ENCODE measurements at regions of chr20 and their contacts with region 1.

Region 1: DNA sequence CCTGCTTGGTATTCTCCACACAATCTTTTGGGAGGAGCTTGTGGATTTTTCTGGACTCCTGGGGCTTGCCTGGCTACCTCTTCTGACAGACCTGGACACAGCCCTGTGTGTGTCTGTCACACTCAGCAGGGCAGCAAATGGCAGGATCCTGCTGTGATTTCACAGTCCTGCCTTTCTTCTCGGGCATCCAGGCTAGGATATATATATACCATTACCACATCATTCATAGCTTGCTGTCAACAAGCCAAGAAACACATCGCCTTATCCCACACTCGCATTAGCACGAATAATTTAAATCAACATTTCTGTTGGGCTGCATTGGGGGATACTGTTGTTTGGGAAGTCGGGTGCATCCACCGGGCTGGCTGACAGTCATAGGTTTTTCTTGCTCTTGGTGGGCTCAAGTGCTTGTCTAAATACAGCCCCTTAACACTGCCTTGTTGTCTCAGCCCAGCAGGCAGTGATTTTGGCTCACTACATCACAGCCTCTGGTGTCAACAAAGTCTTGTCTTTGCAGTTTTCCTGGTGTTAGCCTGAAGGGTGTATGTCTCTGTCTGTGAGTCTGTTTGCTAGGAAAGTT is 154.9 kb upstream of the FERMT1 start:
- DNase-seq: no peak
- ATAC-seq: no peak
- H3K4me3 ChIP-seq: no peak overlapping the region
- H3K27ac ChIP-seq: no peak overlapping the region
- H3K4me1 ChIP-seq: no peaks in the 10 kb centered on the region
- H3K27me3 ChIP-seq: no peaks in the 10 kb centered on the region
- CTCF ChIP-seq: no peak
- POLR2A ChIP-seq: no peak

Region 2: DNA sequence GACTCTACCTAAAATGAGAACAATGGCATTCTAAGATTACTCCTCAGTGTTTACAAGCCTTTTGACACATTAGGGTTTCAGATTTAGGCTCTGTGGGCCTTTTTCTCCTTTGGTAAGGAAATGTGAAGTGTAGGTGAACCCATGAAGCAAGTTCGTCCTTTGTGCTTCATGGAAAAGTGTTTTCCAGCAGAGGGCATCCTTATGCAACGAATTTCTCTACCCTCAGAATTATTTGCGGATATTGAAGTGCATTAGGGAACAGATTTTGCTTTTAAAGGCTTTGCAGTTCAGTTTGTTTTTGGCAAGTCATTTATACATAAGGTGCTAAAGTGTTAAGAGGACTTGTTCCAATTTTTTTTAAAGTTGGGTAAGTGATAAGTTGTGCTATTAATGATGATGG is 99.2 kb before region 1 on chr20:
- in situ Hi-C with region 1: loop called in 1 of 4 experiments (anchors 25 kb)
- intact Hi-C with region 1: no loop called
- DNase-seq: no peak
- ATAC-seq: no peak
- H3K4me3 ChIP-seq: no peak overlapping the region
- H3K27ac ChIP-seq: no peak overlapping the region
- H3K4me1 ChIP-seq: no peaks in the 10 kb centered on the region
- H3K27me3 ChIP-seq: no peaks in the 10 kb centered on the region
- CTCF ChIP-seq: no peak
- POLR2A ChIP-seq: no peak

Region 3: GRCh38 chr20:6333110-6333509 is 55.4 kb after region 1 on chr20:
- in situ Hi-C with region 1: no loop called
- intact Hi-C with region 1: no loop called
- DNase-seq: no peak
- ATAC-seq: no peak
- H3K4me3 ChIP-seq: no peak overlapping the region
- H3K27ac ChIP-seq: no peak overlapping the region
- H3K4me1 ChIP-seq: no peaks in the 10 kb centered on the region
- H3K27me3 ChIP-seq: no peaks in the 10 kb centered on the region
- CTCF ChIP-seq: no peak
- POLR2A ChIP-seq: no peak